ENCODE measurements at regions of chr16 and their contacts with region 1.

Region 1: GRCh38 chr16:68264128-68265077 is at the start of gene SLC7A6:
- DNase-seq: peak; percentile 65
- H3K4me3 ChIP-seq: peak within 1 kb of the TSS; percentile 74 to 76
- H3K27ac ChIP-seq: peak within 1 kb of the TSS; percentile 92 to 95
- H3K4me1 ChIP-seq: peaks cover 11% of the 10 kb centered on the region
- H3K27me3 ChIP-seq: no peaks in the 10 kb centered on the region
- CTCF ChIP-seq: peak; percentile 39 to 80 (median 54)
- POLR2A ChIP-seq: peak; percentile 43
- total RNA-seq, gene SLC7A6: 12.8 to 30.5 TPM

Region 2: DNA sequence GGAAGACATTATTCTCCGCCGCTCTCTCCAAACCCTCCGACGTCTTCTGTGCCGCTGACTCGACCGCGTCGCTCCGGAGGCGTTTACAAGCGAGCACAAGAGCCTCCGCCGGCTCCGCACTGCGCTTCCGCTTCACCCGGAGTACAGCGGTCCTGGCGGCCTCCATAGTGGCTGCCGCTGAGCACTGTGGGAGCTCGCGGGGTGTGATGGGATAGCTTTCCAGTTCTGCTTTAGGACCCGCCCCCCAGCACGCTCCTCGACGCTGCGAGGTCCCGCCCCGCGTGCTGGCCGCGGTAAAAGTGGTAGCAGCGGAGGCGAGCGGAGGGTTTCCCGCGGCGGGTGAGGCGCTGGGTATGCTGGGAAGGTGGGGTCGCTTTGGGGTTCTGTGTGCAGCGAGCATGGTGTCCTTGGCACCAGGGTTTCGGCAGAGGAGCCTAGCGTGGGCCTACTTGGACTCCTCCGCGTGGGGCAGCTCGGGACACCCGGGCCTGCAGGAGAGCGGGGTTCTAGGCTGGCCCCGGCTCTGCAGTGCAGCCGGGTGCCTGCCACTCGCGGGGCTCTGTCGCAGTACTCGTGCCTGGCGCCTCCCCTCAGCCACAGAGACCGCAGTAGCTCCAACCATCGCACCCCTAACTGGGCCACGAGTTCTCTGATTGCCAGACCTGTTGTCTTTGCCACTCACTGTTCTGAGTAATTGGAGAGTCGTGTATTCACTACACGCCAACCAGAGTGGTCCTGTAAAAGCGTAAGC is 46.5 kb after region 1 on chr16 and contains the starts of genes PRMT7 and SLC7A6OS:
- intact Hi-C with region 1: loop called (anchors 5 kb)
- DNase-seq: peak; percentile 91
- H3K4me3 ChIP-seq: peak within 1 kb of the TSS; percentile 65 to 76
- H3K27ac ChIP-seq: peak within 1 kb of the TSS; percentile 70 to 72
- H3K4me1 ChIP-seq: peaks cover 8% of the 10 kb centered on the region
- H3K27me3 ChIP-seq: no peaks in the 10 kb centered on the region
- CTCF ChIP-seq: peak in 3 of 4 experiments; percentile 15 to 46 (median 38)
- POLR2A ChIP-seq: peak; percentile 58
- total RNA-seq, gene PRMT7: 45.2 to 77.9 TPM
- total RNA-seq, gene SLC7A6OS: 10.0 to 23.6 TPM

Region 3: GRCh38 chr16:68328151-68328859 is 63.9 kb after region 1 on chr16:
- intact Hi-C with region 1: loop called (anchors 1 kb)
- DNase-seq: peak; percentile 76
- H3K4me3 ChIP-seq: no peak overlapping the region
- H3K27ac ChIP-seq: no peak overlapping the region
- H3K4me1 ChIP-seq: no peaks in the 10 kb centered on the region
- H3K27me3 ChIP-seq: no peaks in the 10 kb centered on the region
- CTCF ChIP-seq: peak; percentile 79 to 96 (median 90)
- POLR2A ChIP-seq: no peak

Region 4: GRCh38 chr16:68503334-68503733 is 238.9 kb after region 1 on chr16:
- intact Hi-C with region 1: loop called (anchors 5 kb)
- DNase-seq: no peak
- H3K4me3 ChIP-seq: no peak overlapping the region
- H3K27ac ChIP-seq: no peak overlapping the region
- H3K4me1 ChIP-seq: no peaks in the 10 kb centered on the region
- H3K27me3 ChIP-seq: no peaks in the 10 kb centered on the region
- CTCF ChIP-seq: no peak
- POLR2A ChIP-seq: no peak

Region 5: GRCh38 chr16:68658258-68659008 is 394.0 kb after region 1 on chr16:
- intact Hi-C with region 1: no loop called
- DNase-seq: peak; percentile 82
- H3K4me3 ChIP-seq: no peak overlapping the region
- H3K27ac ChIP-seq: peak overlapping the region; percentile 62 to 64
- H3K4me1 ChIP-seq: no peaks in the 10 kb centered on the region
- H3K27me3 ChIP-seq: no peaks in the 10 kb centered on the region
- CTCF ChIP-seq: no peak
- POLR2A ChIP-seq: no peak